ENCODE measurements at regions of chrX and their contacts with region 1.

Region 1: DNA sequence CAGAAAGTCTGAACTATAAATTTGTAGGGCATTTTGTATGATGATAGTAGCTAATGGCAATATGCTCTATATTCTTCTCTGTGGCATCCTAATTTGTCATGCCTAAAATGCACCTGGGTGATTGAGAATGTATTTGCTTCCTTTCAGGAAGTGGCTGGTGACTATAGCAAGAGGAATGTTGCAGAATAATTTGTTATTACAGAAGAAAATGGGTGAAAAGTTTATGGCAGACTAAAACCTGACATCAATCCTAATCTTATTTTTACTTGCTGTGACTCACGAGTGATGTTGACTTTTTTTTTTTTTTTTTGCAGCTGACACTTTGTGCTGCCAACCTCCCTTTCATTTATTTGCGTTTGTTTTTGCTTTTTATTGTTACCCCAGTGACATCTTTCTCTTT is 141.1 kb downstream of the MSL3 start:
- DNase-seq: peak; percentile 5 to 89
- H3K4me3 ChIP-seq: no peak overlapping the region; the same call in 1 of the 2 replicates
- H3K27ac ChIP-seq: peak overlapping the region; percentile 83
- H3K4me1 ChIP-seq: peaks cover 29% of the 10 kb centered on the region
- H3K27me3 ChIP-seq: no peaks in the 10 kb centered on the region
- CTCF ChIP-seq: no peak

Region 2: DNA sequence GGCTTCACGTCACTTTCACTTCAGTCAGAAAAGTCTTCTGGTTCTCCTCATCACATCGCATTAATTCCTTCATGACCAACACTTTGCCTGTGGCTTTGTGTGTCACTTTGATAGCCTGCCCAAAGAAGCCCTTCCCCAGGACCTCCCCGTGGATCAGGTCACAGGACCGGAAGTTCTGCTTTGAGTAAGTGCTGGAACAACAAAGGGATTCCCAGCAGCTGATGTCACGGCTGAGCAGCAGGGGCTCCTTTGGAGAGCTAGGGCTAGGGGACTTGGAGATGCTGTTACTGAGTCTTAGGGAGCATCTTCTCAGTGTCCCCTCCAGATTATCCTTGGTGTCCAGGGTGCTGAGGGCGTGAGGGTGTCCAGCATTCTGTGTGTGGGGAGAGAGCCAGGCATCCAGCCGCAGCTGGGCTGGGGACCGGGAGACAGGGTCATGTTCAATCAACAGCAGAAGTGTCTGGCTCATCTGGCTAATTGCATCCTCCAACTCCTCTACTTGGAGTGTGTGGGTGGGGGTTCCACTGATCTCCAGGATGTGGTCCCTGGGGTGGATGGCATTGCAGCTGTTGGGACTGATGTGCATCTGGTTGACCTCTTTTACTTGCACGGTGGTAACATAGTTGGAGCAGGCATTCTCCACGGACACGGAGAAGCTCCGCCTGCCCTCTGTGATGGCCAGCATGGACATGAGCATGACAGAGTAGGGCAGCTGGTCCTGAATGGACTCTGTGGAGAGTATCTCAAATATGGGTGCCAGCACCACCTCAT is 194.2 kb before region 1 on chrX:
- CTCF ChIA-PET with region 1: no interaction called
- POLR2A ChIA-PET with region 1: no interaction called
- intact Hi-C with region 1: no loop called
- DNase-seq: no peak
- H3K4me3 ChIP-seq: no peak overlapping the region
- H3K27ac ChIP-seq: no peak overlapping the region
- H3K4me1 ChIP-seq: no peaks in the 10 kb centered on the region
- H3K27me3 ChIP-seq: no peaks in the 10 kb centered on the region
- CTCF ChIP-seq: no peak

Region 3: DNA sequence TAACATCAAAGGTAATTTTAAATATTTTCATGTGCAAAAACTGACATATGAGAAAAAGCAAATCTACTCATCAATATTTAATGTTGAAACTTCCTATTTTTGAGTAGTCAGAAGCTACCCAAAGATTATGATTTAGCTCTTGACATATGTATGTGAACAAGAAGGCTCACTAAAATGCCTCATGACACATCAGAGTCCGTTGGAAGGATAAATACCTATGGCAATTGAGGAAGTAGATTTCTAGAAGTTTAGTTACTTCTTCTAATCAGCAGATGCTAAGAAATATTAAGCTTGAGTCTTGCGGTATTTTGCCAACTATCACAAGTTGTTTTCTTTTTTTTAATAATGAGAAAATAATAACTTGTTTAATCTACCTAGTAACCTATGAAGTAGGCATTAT is 85.8 kb before region 1 on chrX:
- CTCF ChIA-PET with region 1: no interaction called
- POLR2A ChIA-PET with region 1: no interaction called
- intact Hi-C with region 1: no loop called
- DNase-seq: no peak
- H3K4me3 ChIP-seq: no peak overlapping the region
- H3K27ac ChIP-seq: no peak overlapping the region
- H3K4me1 ChIP-seq: no peaks in the 10 kb centered on the region
- H3K27me3 ChIP-seq: no peaks in the 10 kb centered on the region
- CTCF ChIP-seq: no peak

Region 4: GRCh38 chrX:11867610-11868345 is 31.3 kb before region 1 on chrX:
- CTCF ChIA-PET with region 1: no interaction called
- POLR2A ChIA-PET with region 1: no interaction called
- intact Hi-C with region 1: no loop called
- DNase-seq: no peak
- H3K4me3 ChIP-seq: no peak overlapping the region
- H3K27ac ChIP-seq: no peak overlapping the region
- H3K4me1 ChIP-seq: no peaks in the 10 kb centered on the region
- H3K27me3 ChIP-seq: no peaks in the 10 kb centered on the region
- CTCF ChIP-seq: no peak

Region 5: DNA sequence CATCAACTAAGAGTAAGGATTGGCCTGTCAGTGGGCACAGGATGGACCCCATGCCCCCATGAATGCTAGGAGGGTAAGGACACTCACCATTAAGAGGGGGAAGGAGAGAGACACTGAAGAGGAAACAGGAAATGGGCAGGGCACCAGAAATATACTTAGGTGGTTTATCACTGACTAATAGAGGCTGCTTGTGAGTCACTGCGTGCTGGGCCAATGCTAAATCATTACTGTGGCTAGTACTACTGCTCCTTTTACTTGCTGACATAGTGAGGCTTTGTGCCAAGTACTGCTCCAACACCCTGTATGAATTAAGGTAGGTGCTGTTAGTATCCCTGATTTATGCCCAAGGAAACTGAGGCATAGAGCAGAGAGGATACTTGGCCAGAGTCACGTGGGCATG is 108.8 kb after region 1 on chrX:
- CTCF ChIA-PET with region 1: no interaction called
- POLR2A ChIA-PET with region 1: no interaction called
- intact Hi-C with region 1: loop called (anchors 1 kb)
- DNase-seq: peak; percentile 15 to 51
- H3K4me3 ChIP-seq: no peak overlapping the region
- H3K27ac ChIP-seq: no peak overlapping the region
- H3K4me1 ChIP-seq: peaks cover 3% of the 10 kb centered on the region; the same call in 1 of the 2 replicates
- H3K27me3 ChIP-seq: no peaks in the 10 kb centered on the region
- CTCF ChIP-seq: no peak

Measured in PC-9 (cell line).